ENCODE measurements at regions of chr17 and their contacts with region 1.

Region 1: DNA sequence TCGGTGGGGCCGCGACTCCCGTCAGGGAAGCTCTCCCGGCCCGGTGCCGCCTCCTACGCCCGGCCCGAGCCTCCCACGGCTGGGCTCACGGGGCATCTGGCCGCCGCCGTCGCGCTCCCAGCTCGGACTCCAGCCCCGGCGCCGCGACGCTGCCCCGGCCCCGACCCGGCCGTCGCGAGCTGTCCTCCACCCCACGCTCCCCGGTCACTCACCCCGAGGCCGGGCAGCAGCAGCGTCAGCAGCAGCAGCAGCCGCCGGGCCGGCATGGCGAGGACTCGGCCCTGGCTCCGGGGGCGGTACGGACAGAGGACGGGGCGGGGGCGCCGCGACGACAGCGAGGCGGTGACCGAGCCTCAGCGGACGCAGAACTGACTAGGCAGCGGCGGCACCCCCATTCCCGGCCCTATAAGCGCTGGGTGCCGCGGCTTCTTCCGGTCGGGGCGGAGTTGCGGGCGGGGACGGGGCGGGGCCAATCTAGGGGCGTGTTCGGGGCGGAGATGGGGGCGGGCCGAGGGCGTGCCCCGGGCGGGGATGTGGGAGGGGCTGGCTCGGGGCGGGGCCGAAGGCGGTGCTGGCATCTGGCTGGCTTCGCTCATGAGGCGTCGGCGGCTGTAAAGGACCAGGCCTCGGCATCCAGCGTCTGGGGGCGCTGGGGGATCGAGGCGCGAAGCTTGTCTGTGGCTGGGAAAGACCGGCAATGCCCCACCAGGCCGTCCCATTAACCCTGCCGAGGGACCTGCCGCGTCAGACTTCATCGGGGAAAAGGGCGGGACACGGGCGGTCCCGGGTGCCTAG is at the start of gene ERN1:
- DNase-seq: peak; percentile 92
- H3K4me3 Mint-ChIP-seq: peak within 1 kb of the TSS; percentile 90
- H3K27ac Mint-ChIP-seq: peak within 1 kb of the TSS; percentile 92
- H3K4me1 Mint-ChIP-seq: peaks cover 52% of the 10 kb centered on the region
- H3K27me3 Mint-ChIP-seq: no peaks in the 10 kb centered on the region
- total RNA-seq, gene ERN1: 21.9 to 22.0 TPM

Region 2: DNA sequence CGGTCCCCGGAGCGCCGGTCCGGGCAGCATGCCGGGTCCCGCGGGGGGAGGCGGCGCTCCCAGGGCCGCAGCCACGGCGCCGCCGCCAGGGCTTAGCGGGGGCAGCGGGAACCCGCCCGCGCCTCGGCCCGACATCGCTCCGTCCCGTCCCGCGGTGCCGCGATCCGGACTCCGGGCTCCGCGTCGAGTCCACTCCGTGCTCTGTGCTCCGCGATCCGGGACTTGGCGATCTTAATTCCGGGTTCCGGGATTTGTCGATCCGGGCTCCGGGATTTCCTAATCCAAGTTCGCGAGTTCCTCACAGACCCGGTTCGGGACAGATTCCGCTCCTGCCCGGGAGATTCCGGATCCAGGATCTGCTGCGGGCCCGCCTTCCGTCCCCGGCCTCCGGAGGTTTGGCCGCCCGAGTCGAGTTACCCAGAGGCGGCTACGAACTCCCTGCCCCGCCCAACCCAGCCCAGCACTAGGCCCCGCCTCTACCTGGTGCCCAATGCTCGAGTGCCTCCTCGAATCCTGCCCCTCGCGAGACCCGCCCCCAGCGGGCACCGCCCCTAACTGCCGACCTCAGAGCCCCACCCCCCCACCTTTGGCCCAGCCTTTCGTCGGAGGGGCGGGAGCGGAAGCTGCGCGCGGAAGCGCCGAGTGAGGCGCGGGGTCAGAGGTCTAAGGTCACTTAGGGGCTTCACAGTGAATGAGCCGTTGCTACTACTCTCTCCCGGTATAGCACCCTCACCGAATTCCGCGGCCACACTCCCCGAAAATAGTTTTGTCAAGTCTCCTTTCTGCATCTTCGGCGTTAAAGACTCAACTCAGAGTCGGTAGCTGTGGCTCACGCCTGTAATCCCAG is 287.2 kb before region 1 on chr17 and contains the start of gene SMARCD2:
- CTCF ChIA-PET with region 1: no interaction called
- intact Hi-C with region 1: loop called (anchors 2 kb)
- DNase-seq: peak; percentile 100
- H3K4me3 Mint-ChIP-seq: peak within 1 kb of the TSS; percentile 94
- H3K27ac Mint-ChIP-seq: peak within 1 kb of the TSS; percentile 94
- H3K4me1 Mint-ChIP-seq: peaks cover 40% of the 10 kb centered on the region
- H3K27me3 Mint-ChIP-seq: no peaks in the 10 kb centered on the region
- total RNA-seq, gene SMARCD2: 98.5 to 107 TPM

Region 3: DNA sequence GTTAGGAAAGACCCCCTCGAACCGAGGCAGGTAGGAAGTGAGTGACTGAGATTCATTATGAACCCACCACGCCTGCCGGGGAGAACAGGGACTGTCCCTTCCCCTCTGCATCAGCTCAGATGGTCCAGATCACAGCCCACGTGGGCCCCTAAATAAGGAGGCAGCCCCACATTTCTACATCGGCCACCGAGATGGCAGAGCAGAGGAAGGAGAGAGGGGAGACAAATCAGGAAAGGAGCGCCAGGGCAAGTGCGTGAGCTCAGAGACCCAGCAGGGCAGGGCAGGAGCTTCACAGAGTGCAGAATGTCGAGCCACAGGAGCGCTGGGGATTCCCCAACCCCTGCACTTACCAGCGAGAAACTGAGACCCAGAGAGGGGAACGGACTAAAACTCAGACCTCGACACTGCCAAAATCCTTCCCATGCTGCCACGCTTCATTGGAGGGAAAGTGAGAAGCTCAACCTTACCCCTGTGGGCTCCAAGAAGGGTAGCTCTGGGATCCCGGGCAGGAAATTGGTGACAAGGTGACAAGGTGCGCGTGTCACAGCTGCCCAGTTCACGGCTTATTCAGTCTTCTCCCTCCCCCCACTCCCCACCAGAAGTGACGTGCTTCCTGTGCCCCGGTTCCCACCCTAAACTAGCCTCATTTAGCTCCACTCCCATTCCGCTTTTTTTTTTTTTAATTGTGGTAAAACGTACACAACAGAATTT is 109.8 kb before region 1 on chr17 and contains the start of gene ICAM2:
- CTCF ChIA-PET with region 1: interaction called, 372 read pairs
- intact Hi-C with region 1: loop called (anchors 1 kb)
- DNase-seq: peak; percentile 95
- H3K4me3 Mint-ChIP-seq: peak within 1 kb of the TSS; percentile 97
- H3K27ac Mint-ChIP-seq: peak within 1 kb of the TSS; percentile 98
- H3K4me1 Mint-ChIP-seq: peaks cover 62% of the 10 kb centered on the region
- H3K27me3 Mint-ChIP-seq: no peaks in the 10 kb centered on the region
- total RNA-seq, gene ICAM2: 41.6 to 41.9 TPM

Region 4: GRCh38 chr17:64063766-64064224 is 66.2 kb before region 1 on chr17:
- CTCF ChIA-PET with region 1: interaction called, 189 read pairs
- intact Hi-C with region 1: loop called (anchors 1 kb)
- DNase-seq: peak; percentile 82
- H3K4me3 Mint-ChIP-seq: peak overlapping the region; percentile 16
- H3K27ac Mint-ChIP-seq: peak overlapping the region; percentile 66
- H3K4me1 Mint-ChIP-seq: peaks cover 67% of the 10 kb centered on the region
- H3K27me3 Mint-ChIP-seq: no peaks in the 10 kb centered on the region

Region 5: GRCh38 chr17:64117981-64118979 is 11.7 kb before region 1 on chr17:
- CTCF ChIA-PET with region 1: interaction called, 10 read pairs
- intact Hi-C with region 1: no loop called
- DNase-seq: no peak
- H3K4me3 Mint-ChIP-seq: no peak overlapping the region
- H3K27ac Mint-ChIP-seq: no peak overlapping the region
- H3K4me1 Mint-ChIP-seq: peaks cover 69% of the 10 kb centered on the region
- H3K27me3 Mint-ChIP-seq: no peaks in the 10 kb centered on the region

Measured in activated naive CD4-positive, alpha-beta T cell treated with anti-CD3 and anti-CD28 coated beads for 36 hours (primary cell).